CD4-positive, alpha-beta memory T cell (primary cell): ENCODE measurements at regions of chr21 and their contacts with region 1.

Region 1: DNA sequence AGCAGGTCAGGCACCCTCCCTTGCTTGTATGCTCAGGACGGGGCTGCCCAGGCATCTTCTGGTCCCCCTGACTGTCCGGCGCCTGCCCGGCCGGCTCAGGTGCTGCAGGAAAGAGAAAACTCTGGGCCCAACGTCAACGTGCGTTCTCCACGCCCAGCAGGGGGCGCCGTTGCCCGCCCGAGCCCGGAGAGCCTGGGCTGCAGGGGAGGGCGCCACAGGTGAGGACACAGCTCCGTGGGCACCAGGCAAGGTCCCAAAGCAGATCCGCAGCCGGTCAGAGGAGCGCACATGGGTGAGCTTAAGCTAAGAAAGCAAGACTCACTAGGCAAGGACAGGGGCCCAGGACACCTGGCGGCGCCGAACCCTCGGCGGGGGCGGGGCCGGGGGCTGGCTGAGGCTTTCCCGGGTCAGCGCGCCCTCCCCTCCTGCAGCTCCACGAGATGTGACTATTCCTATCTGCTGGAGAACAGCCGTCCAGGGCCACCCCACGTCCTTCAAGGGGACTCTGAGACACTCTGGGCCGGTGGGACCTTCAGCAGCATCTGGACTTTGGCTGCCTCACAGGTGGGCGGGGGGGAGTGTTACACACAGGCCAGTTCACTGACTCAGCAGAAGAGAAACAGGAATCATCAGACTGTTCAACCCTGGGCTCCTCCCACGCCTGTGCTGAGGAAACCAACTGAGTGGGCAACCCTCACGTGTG is 29.3 kb downstream of the KRTAP10-1 start:
- DNase-seq: peak; percentile 75 to 84 (median 81)
- H3K4me3 ChIP-seq: peak overlapping the region in 1 of 2 donors; percentile 51
- H3K4me3 Mint-ChIP-seq: peak overlapping the region in 7 of 8 donors; percentile 36 to 77 (median 67)
- H3K27ac ChIP-seq: no peak overlapping the region
- H3K27ac Mint-ChIP-seq: no peak overlapping the region
- H3K4me1 ChIP-seq: peaks cover 10% of the 10 kb centered on the region
- H3K4me1 Mint-ChIP-seq: peaks cover 0 to 1% (median 0%) of the 10 kb centered on the region in 4 donors
- H3K27me3 ChIP-seq: no peaks in the 10 kb centered on the region
- H3K27me3 Mint-ChIP-seq: no peaks in the 10 kb centered on the region

Region 2: DNA sequence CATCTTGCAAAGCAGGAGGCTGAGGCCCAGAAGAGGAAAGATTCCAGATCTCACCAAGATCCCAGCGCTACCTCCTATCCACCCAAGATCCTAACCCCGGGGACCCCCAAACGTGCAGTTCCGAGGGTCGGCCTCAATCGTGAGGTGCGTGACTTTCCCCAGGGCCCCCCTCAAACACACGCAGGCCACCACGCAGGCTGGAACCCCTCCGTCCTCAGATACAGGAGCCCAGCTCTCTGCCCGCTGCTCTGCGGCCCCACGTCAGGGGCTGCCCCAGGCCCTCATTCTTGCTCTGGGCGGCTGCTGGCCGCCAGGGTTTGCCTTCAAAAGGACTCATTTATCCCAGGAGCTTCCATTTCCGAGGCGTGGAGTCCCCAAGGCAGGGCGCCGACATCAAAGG is 10.5 kb before region 1 on chr21:
- CTCF ChIA-PET with region 1: interaction called, 14 read pairs
- POLR2A ChIA-PET with region 1: no interaction called
- intact Hi-C with region 1: no loop called
- DNase-seq: no peak
- H3K4me3 ChIP-seq: no peak overlapping the region
- H3K4me3 Mint-ChIP-seq: no peak overlapping the region
- H3K27ac ChIP-seq: no peak overlapping the region
- H3K27ac Mint-ChIP-seq: no peak overlapping the region
- H3K4me1 ChIP-seq: no peaks in the 10 kb centered on the region
- H3K4me1 Mint-ChIP-seq: peaks cover 0 to 1% (median 0%) of the 10 kb centered on the region in 4 donors
- H3K27me3 ChIP-seq: no peaks in the 10 kb centered on the region
- H3K27me3 Mint-ChIP-seq: peaks cover 11 to 17% of the 10 kb centered on the region in 2 donors

Region 3: DNA sequence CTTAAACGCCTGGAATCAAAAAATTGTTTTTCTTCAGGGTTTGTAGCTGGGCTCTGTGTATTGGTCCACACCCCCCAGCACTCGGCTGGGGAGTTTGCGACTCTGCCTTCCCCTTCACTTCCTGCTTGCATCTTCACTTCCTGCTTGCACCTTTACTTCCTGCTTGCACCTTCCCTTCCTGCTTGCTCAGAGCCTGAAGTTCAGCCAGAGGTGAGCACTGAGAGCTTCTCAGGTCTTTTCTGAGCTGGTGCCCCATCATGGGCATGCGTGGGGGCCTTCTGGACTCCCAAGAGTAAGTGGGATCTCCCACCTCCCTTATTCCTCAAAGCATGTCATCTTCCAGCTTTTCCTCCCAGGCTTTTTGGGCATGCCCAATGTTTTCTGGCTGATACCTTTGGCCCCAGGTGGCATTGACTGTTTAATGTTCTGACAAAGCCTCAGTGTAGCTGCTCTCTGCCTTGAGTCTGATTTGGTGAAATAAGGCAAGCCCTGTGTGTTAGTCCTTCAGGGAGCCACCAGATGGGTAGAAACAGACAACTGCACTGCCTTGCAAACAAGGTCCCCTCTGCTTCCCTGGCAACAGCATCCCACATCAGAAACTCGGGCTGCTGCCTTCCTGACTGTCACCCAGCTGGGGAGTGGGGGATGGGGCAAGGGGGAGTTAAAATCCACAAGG is 37.1 kb after region 1 on chr21:
- CTCF ChIA-PET with region 1: interaction called, 13 read pairs
- POLR2A ChIA-PET with region 1: interaction called, 4 read pairs
- intact Hi-C with region 1: no loop called
- DNase-seq: peak; percentile 43 to 58 (median 50)
- H3K4me3 ChIP-seq: peak overlapping the region in 1 of 2 donors; percentile 35
- H3K4me3 Mint-ChIP-seq: peak overlapping the region; percentile 76 to 86 (median 82)
- H3K27ac ChIP-seq: no peak overlapping the region
- H3K27ac Mint-ChIP-seq: peak overlapping the region; percentile 82 to 95 (median 87)
- H3K4me1 ChIP-seq: peaks cover 20% of the 10 kb centered on the region
- H3K4me1 Mint-ChIP-seq: peaks cover 19 to 35% (median 28%) of the 10 kb centered on the region in 4 donors
- H3K27me3 ChIP-seq: no peaks in the 10 kb centered on the region
- H3K27me3 Mint-ChIP-seq: no peaks in the 10 kb centered on the region

Region 4: GRCh38 chr21:44596068-44596725 is 85.5 kb after region 1 on chr21:
- CTCF ChIA-PET with region 1: interaction called, 10 read pairs
- POLR2A ChIA-PET with region 1: no interaction called
- intact Hi-C with region 1: no loop called
- DNase-seq: no peak
- H3K4me3 ChIP-seq: no peak overlapping the region
- H3K4me3 Mint-ChIP-seq: no peak overlapping the region
- H3K27ac ChIP-seq: no peak overlapping the region
- H3K27ac Mint-ChIP-seq: no peak overlapping the region
- H3K4me1 ChIP-seq: no peaks in the 10 kb centered on the region
- H3K4me1 Mint-ChIP-seq: peaks cover 0 to 8% (median 3%) of the 10 kb centered on the region in 4 donors
- H3K27me3 ChIP-seq: no peaks in the 10 kb centered on the region
- H3K27me3 Mint-ChIP-seq: peaks cover 2 to 12% of the 10 kb centered on the region in 2 donors

Region 5: DNA sequence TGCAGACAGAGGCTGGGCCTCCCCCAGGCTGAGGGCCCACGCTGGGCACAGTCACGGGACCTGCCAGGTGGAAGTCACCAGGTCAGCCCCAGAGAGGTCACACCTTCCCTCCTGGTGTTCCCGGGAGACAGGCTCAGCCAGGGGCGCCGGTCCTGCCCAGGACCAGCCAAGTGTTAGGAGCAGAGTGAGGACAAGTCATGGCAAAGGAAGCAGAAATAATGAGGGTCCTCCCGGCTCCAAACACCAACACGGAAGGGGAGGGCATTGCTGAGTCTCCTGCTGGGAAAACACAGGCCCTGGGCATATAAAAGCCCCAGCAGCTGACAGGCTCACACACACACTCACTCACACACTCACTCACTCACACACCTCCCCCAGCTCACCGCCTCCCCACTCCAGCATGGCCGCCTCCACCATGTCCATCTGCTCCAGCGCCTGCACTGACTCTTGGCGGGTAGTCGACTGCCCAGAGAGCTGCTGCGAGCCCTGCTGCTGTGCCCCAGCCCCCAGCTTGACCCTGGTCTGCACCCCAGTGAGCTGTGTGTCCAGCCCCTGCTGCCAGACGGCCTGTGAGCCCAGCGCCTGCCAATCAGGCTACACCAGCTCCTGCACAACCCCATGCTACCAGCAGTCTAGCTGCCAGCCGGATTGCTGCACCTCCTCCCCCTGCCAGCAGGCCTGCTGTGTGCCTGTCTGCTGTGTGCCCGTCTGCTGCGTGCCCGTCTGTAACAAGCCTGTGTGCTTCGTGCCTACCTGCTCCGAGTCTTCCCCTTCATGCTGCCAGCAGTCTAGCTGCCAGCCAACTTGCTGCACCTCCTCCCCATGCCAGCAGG is 126.6 kb after region 1 on chr21 and contains the start of gene KRTAP10-10:
- CTCF ChIA-PET with region 1: no interaction called
- POLR2A ChIA-PET with region 1: no interaction called
- intact Hi-C with region 1: no loop called
- DNase-seq: no peak
- H3K4me3 ChIP-seq: no peak within 1 kb of the TSS
- H3K4me3 Mint-ChIP-seq: peak within 1 kb of the TSS in 1 of 8 donors; percentile 55
- H3K27ac ChIP-seq: no peak within 1 kb of the TSS
- H3K27ac Mint-ChIP-seq: peak within 1 kb of the TSS in 2 of 7 donors; percentile 54 to 57
- H3K4me1 ChIP-seq: no peaks in the 10 kb centered on the region
- H3K4me1 Mint-ChIP-seq: peaks cover 0 to 5% (median 1%) of the 10 kb centered on the region in 4 donors
- H3K27me3 ChIP-seq: no peaks in the 10 kb centered on the region
- H3K27me3 Mint-ChIP-seq: peaks cover 1 to 13% of the 10 kb centered on the region in 2 donors
- total RNA-seq, gene KRTAP10-10: not detected

Region 6: GRCh38 chr21:44742418-44743153 is 231.9 kb after region 1 on chr21:
- CTCF ChIA-PET with region 1: interaction called, 269 read pairs
- POLR2A ChIA-PET with region 1: interaction called, 20 read pairs
- intact Hi-C with region 1: no loop called
- DNase-seq: peak in 4 of 5 donors; percentile 40 to 54 (median 47)
- H3K4me3 ChIP-seq: no peak overlapping the region
- H3K4me3 Mint-ChIP-seq: no peak overlapping the region
- H3K27ac ChIP-seq: no peak overlapping the region
- H3K27ac Mint-ChIP-seq: peak overlapping the region in 4 of 7 donors; percentile 48 to 83 (median 79)
- H3K4me1 ChIP-seq: no peaks in the 10 kb centered on the region
- H3K4me1 Mint-ChIP-seq: peaks cover 4 to 12% (median 4%) of the 10 kb centered on the region in 4 donors
- H3K27me3 ChIP-seq: no peaks in the 10 kb centered on the region
- H3K27me3 Mint-ChIP-seq: peaks cover 0 to under 1% of the 10 kb centered on the region in 2 donors

Region 7: GRCh38 chr21:44792702-44793591 is 282.3 kb after region 1 on chr21:
- CTCF ChIA-PET with region 1: interaction called, 77 read pairs
- POLR2A ChIA-PET with region 1: interaction called, 14 read pairs
- intact Hi-C with region 1: loop called (anchors 1 kb)
- DNase-seq: peak; percentile 58 to 71 (median 67)
- H3K4me3 ChIP-seq: no peak overlapping the region
- H3K4me3 Mint-ChIP-seq: no peak overlapping the region
- H3K27ac ChIP-seq: no peak overlapping the region
- H3K27ac Mint-ChIP-seq: peak overlapping the region; percentile 29 to 80 (median 58)
- H3K4me1 ChIP-seq: peaks cover 9% of the 10 kb centered on the region
- H3K4me1 Mint-ChIP-seq: peaks cover 25 to 67% (median 38%) of the 10 kb centered on the region in 4 donors
- H3K27me3 ChIP-seq: no peaks in the 10 kb centered on the region
- H3K27me3 Mint-ChIP-seq: no peaks in the 10 kb centered on the region

Region 8: DNA sequence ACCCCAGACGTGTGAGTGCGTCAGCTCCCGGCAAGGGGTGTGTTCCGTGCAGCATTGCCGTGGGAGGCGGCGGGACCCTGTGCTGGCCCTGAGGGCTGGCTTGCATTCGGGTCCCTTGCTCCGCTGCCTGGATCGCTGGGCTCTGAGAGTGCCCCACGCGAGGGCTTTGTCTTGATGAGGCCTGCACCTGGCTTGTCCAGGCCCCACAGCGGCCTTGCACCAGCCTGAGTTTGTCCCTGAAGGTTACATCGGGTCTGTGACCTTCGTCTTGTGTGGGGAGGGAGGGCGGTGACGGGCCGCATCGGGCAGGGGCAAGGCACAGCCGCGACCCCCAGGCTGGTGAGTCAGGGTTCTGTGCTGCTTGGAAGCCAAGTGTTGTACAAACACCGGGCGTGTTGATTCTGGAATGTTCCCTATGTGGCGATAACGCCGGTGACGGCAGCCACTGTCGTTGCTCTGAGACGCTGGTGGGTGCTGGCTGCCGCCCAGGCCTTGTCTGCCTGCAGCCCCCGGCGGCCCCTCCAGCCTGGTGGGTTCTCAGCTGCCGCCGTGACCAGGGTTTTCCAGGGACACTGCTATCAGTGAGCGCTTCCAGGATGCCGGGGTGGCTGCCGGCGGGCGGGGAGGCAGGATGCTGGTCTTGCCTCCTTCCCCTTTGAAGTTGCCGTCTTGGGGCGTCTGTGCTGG is 472.0 kb after region 1 on chr21:
- CTCF ChIA-PET with region 1: no interaction called
- POLR2A ChIA-PET with region 1: no interaction called
- intact Hi-C with region 1: no loop called
- DNase-seq: no peak
- H3K4me3 ChIP-seq: no peak overlapping the region
- H3K4me3 Mint-ChIP-seq: no peak overlapping the region
- H3K27ac ChIP-seq: no peak overlapping the region
- H3K27ac Mint-ChIP-seq: no peak overlapping the region
- H3K4me1 ChIP-seq: no peaks in the 10 kb centered on the region
- H3K4me1 Mint-ChIP-seq: no peaks in the 10 kb centered on the region
- H3K27me3 ChIP-seq: no peaks in the 10 kb centered on the region
- H3K27me3 Mint-ChIP-seq: no peaks in the 10 kb centered on the region